GM12878 (cell line): ENCODE measurements at regions of chr10 and their contacts with region 1.

Region 1: DNA sequence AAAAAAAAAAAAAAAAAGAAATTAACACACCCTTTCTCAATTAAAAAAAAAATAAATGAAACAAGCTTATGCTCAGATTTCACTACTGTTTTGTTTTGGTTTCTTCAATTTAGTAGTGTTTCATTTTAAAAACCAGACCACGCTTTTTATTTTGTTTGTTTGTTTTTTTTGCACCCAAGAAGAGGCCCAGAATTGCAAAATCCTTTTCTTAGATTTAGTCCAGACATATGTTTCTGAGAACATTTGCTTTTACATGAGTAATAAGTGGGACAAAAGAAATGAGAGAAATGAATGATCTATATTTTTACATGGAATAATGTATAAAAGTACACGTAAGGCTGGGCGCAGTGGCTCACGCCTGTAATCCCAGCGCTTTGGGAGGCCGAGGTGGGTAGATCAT is 34.5 kb upstream of the CAMK1D start:
- DNase-seq: no peak
- ATAC-seq: no peak
- H3K4me3 ChIP-seq: no peak overlapping the region
- H3K27ac ChIP-seq: no peak overlapping the region
- H3K4me1 ChIP-seq: no peaks in the 10 kb centered on the region
- H3K27me3 ChIP-seq: no peaks in the 10 kb centered on the region
- CTCF ChIP-seq: no peak
- EP300 ChIP-seq: no peak
- POLR2A ChIP-seq: no peak
- RAD21 ChIP-seq: no peak

Region 2: DNA sequence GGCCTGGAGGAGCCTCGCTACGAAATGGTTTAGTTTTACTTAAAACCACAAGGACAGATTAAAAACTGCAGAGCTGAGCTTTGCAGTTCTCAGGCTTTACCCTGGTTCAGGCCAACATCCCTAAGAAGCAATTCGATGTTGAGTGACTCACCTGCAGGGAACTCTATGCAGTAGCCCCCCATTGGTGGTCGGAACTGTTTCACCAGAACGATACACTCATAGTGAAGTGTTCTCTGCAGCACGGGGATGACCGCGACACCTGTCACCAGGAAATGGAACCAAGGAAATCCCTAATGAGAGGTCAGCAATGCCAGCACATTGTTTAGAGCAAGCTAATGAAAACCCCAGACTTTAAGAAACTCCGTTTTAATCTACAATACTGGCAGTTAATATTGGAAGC is 137.2 kb before region 1 on chr10:
- CTCF ChIA-PET with region 1: no interaction called
- POLR2A ChIA-PET with region 1: no interaction called
- RAD21 ChIA-PET with region 1: no interaction called
- SMC1A ChIA-PET with region 1: no interaction called
- in situ Hi-C with region 1: no loop called
- intact Hi-C with region 1: no loop called
- DNase-seq: no peak
- ATAC-seq: no peak
- H3K4me3 ChIP-seq: no peak overlapping the region
- H3K27ac ChIP-seq: no peak overlapping the region
- H3K4me1 ChIP-seq: no peaks in the 10 kb centered on the region
- H3K27me3 ChIP-seq: no peaks in the 10 kb centered on the region
- CTCF ChIP-seq: no peak
- EP300 ChIP-seq: no peak
- POLR2A ChIP-seq: no peak
- RAD21 ChIP-seq: no peak

Region 3: GRCh38 chr10:12228851-12229250 is 86.0 kb before region 1 on chr10:
- CTCF ChIA-PET with region 1: no interaction called
- POLR2A ChIA-PET with region 1: no interaction called
- RAD21 ChIA-PET with region 1: no interaction called
- SMC1A ChIA-PET with region 1: no interaction called
- in situ Hi-C with region 1: no loop called
- intact Hi-C with region 1: no loop called
- DNase-seq: no peak
- ATAC-seq: no peak
- H3K4me3 ChIP-seq: no peak overlapping the region
- H3K27ac ChIP-seq: no peak overlapping the region
- H3K4me1 ChIP-seq: no peaks in the 10 kb centered on the region
- H3K27me3 ChIP-seq: no peaks in the 10 kb centered on the region
- CTCF ChIP-seq: no peak
- EP300 ChIP-seq: no peak
- POLR2A ChIP-seq: no peak
- RAD21 ChIP-seq: no peak

Region 4: DNA sequence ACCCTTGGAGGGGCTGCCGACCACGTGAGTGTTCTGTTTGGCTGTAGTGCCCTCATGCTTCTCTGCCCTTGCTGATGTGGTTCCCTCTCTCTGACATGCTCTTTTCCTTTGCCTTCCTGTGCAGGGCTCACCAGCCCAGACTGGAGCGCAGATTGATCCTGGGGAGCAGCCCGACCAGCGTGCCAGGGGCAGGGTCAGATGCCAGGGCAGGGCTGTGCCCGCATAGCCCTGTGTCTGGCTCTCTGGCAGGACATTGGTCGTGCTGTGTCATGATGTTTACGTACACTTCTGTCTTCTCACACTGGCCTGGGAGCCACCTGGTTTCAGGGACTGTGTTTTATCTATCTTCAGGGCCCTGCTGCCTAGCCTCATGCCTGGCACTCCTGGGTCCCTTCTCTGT is 335.3 kb after region 1 on chr10:
- CTCF ChIA-PET with region 1: no interaction called
- POLR2A ChIA-PET with region 1: interaction called, 10 read pairs
- RAD21 ChIA-PET with region 1: no interaction called
- SMC1A ChIA-PET with region 1: no interaction called
- in situ Hi-C with region 1: no loop called
- intact Hi-C with region 1: no loop called
- DNase-seq: no peak
- ATAC-seq: no peak
- H3K4me3 ChIP-seq: no peak overlapping the region
- H3K27ac ChIP-seq: no peak overlapping the region
- H3K4me1 ChIP-seq: no peaks in the 10 kb centered on the region
- H3K27me3 ChIP-seq: no peaks in the 10 kb centered on the region
- CTCF ChIP-seq: no peak
- EP300 ChIP-seq: no peak
- POLR2A ChIP-seq: no peak
- RAD21 ChIP-seq: no peak

Region 5: DNA sequence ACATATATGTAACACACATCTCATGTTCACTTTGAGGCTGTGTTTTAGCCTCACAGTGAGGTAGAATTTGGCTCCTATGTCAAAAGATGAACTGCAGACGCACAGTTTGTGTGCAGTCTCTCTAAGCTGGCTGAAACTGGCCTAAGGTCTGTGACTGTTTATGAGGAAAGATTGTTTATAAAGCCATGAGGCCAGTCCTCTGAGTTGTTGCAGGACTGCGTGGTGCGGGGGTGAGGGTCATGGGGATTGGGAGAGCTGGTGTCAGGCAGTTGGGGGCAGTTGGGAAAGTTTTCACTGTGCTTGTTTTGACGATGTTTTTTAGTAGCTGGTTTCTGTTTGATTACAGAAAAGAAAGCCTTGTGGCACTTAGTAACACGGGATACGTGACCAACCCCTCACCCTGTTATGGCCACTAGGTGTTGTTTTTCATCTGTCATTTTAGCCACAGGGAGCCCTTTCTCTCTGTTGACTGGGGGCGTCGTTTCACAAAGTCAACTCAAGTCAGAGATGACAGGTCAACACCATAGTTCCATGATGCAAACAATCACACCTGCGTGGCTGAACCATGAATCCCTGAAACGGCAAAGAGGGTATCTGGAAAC is 375.8 kb after region 1 on chr10:
- CTCF ChIA-PET with region 1: no interaction called
- POLR2A ChIA-PET with region 1: no interaction called
- RAD21 ChIA-PET with region 1: no interaction called
- SMC1A ChIA-PET with region 1: no interaction called
- in situ Hi-C with region 1: no loop called
- intact Hi-C with region 1: no loop called
- DNase-seq: no peak
- ATAC-seq: no peak
- H3K4me3 ChIP-seq: no peak overlapping the region
- H3K27ac ChIP-seq: no peak overlapping the region
- H3K4me1 ChIP-seq: no peaks in the 10 kb centered on the region
- H3K27me3 ChIP-seq: no peaks in the 10 kb centered on the region
- CTCF ChIP-seq: no peak
- EP300 ChIP-seq: no peak
- POLR2A ChIP-seq: no peak
- RAD21 ChIP-seq: no peak